ENCODE measurements at regions of chr2 and their contacts with region 1.

Region 1: GRCh38 chr2:127176371-127177311 is 43.5 kb downstream of the CYP27C1 start:
- DNase-seq: peak; percentile 23
- H3K4me3 ChIP-seq: no peak overlapping the region
- H3K27ac ChIP-seq: peak overlapping the region; percentile 59 to 85 (median 78)
- H3K4me1 ChIP-seq: peaks cover 0 to 34% (median 15%) of the 10 kb centered on the region in 4 donors
- H3K27me3 ChIP-seq: no peaks in the 10 kb centered on the region
- CTCF ChIP-seq: no peak
- EP300 ChIP-seq: no peak
- POLR2A ChIP-seq: no peak

Region 2: GRCh38 chr2:126106006-126106405 is 1070.6 kb before region 1 on chr2:
- in situ Hi-C with region 1: no loop called
- intact Hi-C with region 1: no loop called
- DNase-seq: no peak
- H3K4me3 ChIP-seq: no peak overlapping the region
- H3K27ac ChIP-seq: no peak overlapping the region
- H3K4me1 ChIP-seq: no peaks in the 10 kb centered on the region
- H3K27me3 ChIP-seq: no peaks in the 10 kb centered on the region
- CTCF ChIP-seq: no peak
- EP300 ChIP-seq: no peak
- POLR2A ChIP-seq: no peak

Region 3: GRCh38 chr2:127160676-127161075 is 16.0 kb before region 1 on chr2:
- in situ Hi-C with region 1: no loop called
- intact Hi-C with region 1: loop called (anchors 1 kb)
- DNase-seq: no peak
- H3K4me3 ChIP-seq: no peak overlapping the region
- H3K27ac ChIP-seq: no peak overlapping the region
- H3K4me1 ChIP-seq: no peaks in the 10 kb centered on the region
- H3K27me3 ChIP-seq: no peaks in the 10 kb centered on the region
- CTCF ChIP-seq: no peak
- EP300 ChIP-seq: no peak
- POLR2A ChIP-seq: no peak

Region 4: DNA sequence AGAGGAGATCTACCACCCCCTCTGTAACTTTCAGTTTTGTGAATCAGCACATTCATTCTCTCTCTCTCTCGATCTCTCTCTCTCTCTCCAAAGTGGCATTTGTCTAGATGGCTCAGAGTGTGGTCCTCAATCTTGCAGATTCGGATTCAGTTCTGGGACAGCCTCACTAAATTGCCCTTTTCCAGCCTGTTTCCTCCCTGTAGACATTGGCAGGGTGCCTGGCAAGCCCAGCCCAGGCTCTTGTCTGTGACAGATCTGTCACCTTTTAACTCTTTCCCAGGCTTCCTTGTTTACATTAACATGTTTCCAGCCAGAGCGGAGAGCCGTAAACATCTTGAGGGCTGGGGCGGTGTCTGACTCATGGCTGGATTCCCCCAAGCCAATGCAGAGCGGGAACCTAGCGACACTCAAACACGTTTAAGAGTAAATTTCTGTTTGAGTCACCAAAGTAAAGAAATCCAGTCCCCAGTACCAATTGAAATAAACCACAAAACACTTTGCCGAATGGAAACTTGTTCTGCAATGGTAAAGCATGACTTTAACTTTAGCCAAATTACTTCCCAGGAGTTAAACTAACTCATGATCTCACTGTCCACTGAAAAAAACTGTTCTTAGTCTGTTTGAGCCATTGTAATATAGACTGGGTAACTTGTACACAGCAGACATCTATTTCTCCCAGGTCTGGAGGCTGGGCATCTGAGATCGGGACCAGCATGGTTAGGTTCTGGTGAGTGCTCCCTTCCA is 50.1 kb after region 1 on chr2:
- in situ Hi-C with region 1: no loop called
- intact Hi-C with region 1: loop called (anchors 2 kb)
- DNase-seq: peak; percentile 86
- H3K4me3 ChIP-seq: peak overlapping the region in 1 of 4 donors; percentile 4
- H3K27ac ChIP-seq: peak overlapping the region; percentile 8 to 49 (median 22)
- H3K4me1 ChIP-seq: peaks cover 4 to 15% (median 10%) of the 10 kb centered on the region in 4 donors
- H3K27me3 ChIP-seq: peaks cover 35% of the 10 kb centered on the region
- CTCF ChIP-seq: no peak
- EP300 ChIP-seq: no peak
- POLR2A ChIP-seq: no peak